Activated CD4-positive, alpha-beta T cell treated with anti-CD3 and anti-CD28 coated beads for 36 hours (primary cell): ENCODE measurements at regions of chr11 and their contacts with region 1.

Region 1: DNA sequence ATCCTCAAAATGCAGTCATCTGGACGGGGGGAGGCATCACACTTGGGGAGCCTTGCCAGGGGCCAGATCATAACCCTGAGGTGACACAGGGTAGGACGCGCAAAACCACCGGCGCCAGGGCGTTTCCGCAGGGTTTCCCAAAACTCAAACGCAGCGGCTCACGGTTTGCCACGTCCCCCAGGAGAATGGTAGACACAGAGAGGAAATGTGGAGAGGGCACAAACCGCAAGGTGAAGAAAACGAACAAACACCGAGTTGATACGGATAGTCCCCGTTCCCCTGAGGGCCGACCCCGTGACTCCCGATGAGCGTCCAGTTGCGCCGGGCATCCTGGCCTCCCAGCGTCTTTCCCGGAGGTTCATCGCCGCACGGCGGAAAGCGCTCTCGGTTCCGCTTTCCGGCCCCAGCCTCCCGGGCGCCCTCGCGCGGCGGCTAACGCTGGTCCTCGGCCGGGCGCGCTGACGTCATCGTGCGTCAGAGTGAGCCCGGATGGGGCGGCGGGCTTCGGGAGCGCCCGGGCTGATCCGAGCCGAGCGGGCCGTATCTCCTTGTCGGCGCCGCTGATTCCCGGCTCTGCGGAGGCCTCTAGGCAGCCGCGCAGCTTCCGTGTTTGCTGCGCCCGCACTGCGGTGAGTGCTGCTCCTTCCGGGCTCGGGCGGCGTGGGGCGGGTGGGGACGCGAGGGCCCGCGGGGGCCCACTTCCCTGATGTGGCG is at the start of gene BIRC2:
- DNase-seq: peak; percentile 98
- ATAC-seq: peak; percentile 89
- H3K4me3 Mint-ChIP-seq: peak within 1 kb of the TSS; percentile 94
- H3K27ac Mint-ChIP-seq: peak within 1 kb of the TSS; percentile 99
- H3K4me1 Mint-ChIP-seq: peaks cover 40% of the 10 kb centered on the region
- H3K27me3 Mint-ChIP-seq: no peaks in the 10 kb centered on the region
- total RNA-seq, gene BIRC2: 33.0 to 48.8 TPM

Region 2: DNA sequence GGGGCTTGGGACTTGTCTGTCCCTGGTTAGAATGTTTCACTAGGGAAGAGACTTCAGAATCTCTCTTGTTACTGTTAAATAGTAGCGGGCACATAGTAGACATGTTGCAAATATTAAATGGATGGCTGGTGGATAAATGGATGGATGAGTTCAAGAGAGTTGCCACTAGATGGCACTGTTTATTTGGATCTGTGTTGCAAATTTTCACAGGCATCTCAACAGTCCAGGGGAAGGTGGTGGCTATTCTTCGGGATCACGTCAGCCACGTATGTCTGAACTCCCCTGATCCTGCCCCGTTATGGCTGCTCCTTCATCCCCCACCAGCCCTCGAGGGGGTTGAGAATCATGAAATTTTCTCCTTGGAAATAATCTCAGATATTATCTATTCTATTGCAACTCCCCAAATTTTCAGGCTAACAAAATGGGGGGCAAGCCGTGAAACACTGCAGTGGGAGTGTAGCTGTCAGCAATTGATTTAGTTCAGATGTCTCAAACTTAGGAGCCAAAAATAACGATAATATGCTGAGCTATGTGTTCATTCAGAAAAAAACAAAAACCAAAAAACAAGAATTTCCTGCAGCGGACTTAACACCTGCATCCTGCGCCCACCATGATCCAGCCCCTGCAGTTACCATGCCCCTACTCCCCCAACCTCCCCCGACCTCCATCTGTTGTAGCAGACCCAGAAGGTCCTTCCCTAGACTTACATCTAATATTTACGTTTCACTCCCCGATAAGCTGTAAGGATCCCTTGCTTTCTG is 58.8 kb before region 1 on chr11:
- CTCF ChIA-PET with region 1: interaction called, 67 read pairs
- POLR2A ChIA-PET with region 1: no interaction called
- intact Hi-C with region 1: loop called in 1 of 2 experiments (anchors 1 kb)
- DNase-seq: peak; percentile 50
- ATAC-seq: peak; percentile 92
- H3K4me3 Mint-ChIP-seq: peak overlapping the region; percentile 34
- H3K27ac Mint-ChIP-seq: peak overlapping the region; percentile 59
- H3K4me1 Mint-ChIP-seq: peaks cover 24% of the 10 kb centered on the region
- H3K27me3 Mint-ChIP-seq: no peaks in the 10 kb centered on the region

Region 3: DNA sequence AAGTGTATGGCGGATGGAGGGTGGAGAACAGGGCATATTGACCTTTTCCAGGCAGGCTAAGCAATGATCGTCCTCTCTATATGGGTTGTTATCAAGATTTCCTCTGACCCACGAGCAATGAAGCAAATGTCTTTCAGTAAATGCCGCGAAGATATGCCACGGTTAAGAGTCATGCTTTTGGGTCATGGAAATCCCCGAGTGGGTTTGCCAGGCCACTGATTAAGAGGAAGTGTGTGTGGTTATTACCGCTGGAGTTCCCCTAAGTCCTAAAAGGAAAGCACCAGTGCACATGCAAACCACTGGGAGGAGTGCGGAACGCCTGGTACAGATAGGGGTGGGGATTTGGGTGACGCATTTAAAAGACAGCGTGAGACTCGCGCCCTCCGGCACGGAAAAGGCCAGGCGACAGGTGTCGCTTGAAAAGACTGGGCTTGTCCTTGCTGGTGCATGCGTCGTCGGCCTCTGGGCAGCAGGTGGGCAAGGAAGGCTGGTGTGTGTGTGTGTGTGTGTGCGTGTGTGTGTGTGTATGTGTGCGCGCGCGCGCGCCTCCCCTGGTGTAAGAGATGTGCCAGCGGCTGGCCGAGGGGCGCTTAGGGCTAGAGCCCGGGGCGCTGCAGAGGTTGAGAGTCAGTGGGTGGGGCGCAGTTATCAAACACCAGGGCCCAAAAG is 29.7 kb before region 1 on chr11 and contains the start of gene BIRC3:
- CTCF ChIA-PET with region 1: interaction called, 27 read pairs
- POLR2A ChIA-PET with region 1: interaction called, 3 read pairs
- intact Hi-C with region 1: loop called (anchors 1 kb)
- DNase-seq: peak; percentile 95
- ATAC-seq: peak; percentile 85
- H3K4me3 Mint-ChIP-seq: peak within 1 kb of the TSS; percentile 96
- H3K27ac Mint-ChIP-seq: peak within 1 kb of the TSS; percentile 99
- H3K4me1 Mint-ChIP-seq: peaks cover 68% of the 10 kb centered on the region
- H3K27me3 Mint-ChIP-seq: no peaks in the 10 kb centered on the region
- total RNA-seq, gene BIRC3: 99.2 to 109 TPM

Region 4: GRCh38 chr11:102420547-102420946 is 73.6 kb after region 1 on chr11:
- CTCF ChIA-PET with region 1: interaction called, 3 read pairs
- POLR2A ChIA-PET with region 1: no interaction called
- intact Hi-C with region 1: loop called in 1 of 2 experiments (anchors 2 kb)
- DNase-seq: peak; percentile 59
- ATAC-seq: peak; percentile 73
- H3K4me3 Mint-ChIP-seq: no peak overlapping the region
- H3K27ac Mint-ChIP-seq: peak overlapping the region; percentile 53
- H3K4me1 Mint-ChIP-seq: peaks cover 95% of the 10 kb centered on the region
- H3K27me3 Mint-ChIP-seq: no peaks in the 10 kb centered on the region

Region 5: GRCh38 chr11:102495161-102496042 is 148.5 kb after region 1 on chr11:
- CTCF ChIA-PET with region 1: interaction called, 44 read pairs
- POLR2A ChIA-PET with region 1: no interaction called
- intact Hi-C with region 1: loop called (anchors 1 kb)
- DNase-seq: peak; percentile 40
- ATAC-seq: peak; percentile 68
- H3K4me3 Mint-ChIP-seq: no peak overlapping the region
- H3K27ac Mint-ChIP-seq: no peak overlapping the region
- H3K4me1 Mint-ChIP-seq: peaks cover 28% of the 10 kb centered on the region
- H3K27me3 Mint-ChIP-seq: peaks cover 4% of the 10 kb centered on the region

Region 6: DNA sequence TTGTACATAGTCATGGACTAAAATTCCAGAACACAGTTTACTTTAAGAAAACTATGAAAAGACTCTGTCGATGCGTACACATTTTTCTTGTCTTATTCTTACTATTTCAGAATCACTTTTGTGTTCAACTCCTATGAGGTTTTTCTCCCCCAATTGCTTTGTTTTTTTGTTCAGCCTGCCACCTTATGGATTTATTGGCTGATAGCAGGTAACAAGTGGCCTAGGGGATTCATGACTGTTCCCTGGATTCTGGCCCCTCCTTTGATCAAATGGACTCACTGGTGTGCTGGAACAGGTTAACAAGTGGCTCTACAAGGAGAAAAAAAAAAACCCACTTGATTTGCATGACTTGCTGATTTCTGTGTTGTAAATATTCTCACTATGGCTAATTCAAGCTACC is 267.6 kb after region 1 on chr11:
- CTCF ChIA-PET with region 1: interaction called, 31 read pairs
- POLR2A ChIA-PET with region 1: no interaction called
- intact Hi-C with region 1: loop called in 1 of 2 experiments (anchors 2 kb)
- DNase-seq: no peak
- ATAC-seq: no peak
- H3K4me3 Mint-ChIP-seq: no peak overlapping the region
- H3K27ac Mint-ChIP-seq: no peak overlapping the region
- H3K4me1 Mint-ChIP-seq: peaks cover 13% of the 10 kb centered on the region
- H3K27me3 Mint-ChIP-seq: no peaks in the 10 kb centered on the region